ENCODE measurements at regions of chr18 and their contacts with region 1.

Region 1: GRCh38 chr18:67938660-67939059 is 422.1 kb upstream of the DSEL start:
- DNase-seq: peak; percentile 84
- ATAC-seq: peak; percentile 97
- H3K4me3 ChIP-seq: no peak overlapping the region
- H3K27ac ChIP-seq: peak overlapping the region; percentile 99; the same call in 1 of the 2 replicates
- H3K4me1 ChIP-seq: peaks cover 2% of the 10 kb centered on the region; the same call in 1 of the 2 replicates
- H3K27me3 ChIP-seq: no peaks in the 10 kb centered on the region
- CTCF ChIP-seq: no peak
- POLR2A ChIP-seq: no peak
- RAD21 ChIP-seq: no peak

Region 2: DNA sequence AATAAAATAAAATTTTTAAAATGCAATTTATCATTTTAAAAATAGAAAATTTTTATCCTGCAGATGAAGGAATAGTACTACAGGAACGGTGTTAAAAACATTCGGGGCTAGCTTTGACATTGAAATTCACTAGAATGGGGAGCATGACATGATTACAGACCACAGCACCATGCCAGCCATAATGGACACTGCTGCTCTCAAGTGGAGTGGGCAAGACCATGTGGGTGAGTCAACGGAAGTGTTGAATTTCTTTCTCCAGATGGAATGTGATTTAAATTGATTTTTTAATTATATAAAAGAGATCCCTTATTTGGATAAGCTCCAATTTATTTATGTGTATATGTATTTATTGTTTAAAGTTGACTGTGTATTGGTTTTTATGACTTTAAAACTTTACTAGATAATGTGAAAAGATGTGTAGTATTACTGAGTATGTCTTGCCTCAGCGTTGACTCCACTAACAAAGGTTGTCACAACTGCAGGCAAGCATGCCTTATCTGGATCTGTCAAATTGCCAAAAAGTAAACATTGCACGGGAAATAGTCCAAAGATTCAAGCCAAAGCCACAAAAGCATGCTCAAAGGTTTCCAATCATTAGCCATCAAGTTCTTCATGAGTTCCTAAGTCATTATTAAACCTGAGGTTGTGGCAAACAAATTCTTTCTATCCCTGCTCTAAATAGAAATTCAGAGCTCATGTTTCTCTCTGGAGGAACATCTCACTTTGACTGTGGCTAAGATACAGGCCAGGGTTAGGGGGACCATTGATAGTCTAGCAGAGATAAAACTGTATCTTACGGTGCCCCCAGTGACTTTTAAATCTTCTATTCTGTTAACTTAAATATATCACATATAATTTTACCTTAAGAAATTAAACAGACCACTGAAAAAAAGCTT is 239.4 kb after region 1 on chr18:
- CTCF ChIA-PET with region 1: no interaction called
- POLR2A ChIA-PET with region 1: no interaction called
- dilution Hi-C with region 1: no loop called
- in situ Hi-C with region 1: no loop called
- intact Hi-C with region 1: loop called (anchors 10 kb)
- DNase-seq: peak; percentile 99
- ATAC-seq: peak; percentile 96
- H3K4me3 ChIP-seq: no peak overlapping the region
- H3K27ac ChIP-seq: peak overlapping the region; percentile 91; the same call in 1 of the 2 replicates
- H3K4me1 ChIP-seq: peaks cover 6% of the 10 kb centered on the region; the same call in 1 of the 2 replicates
- H3K27me3 ChIP-seq: no peaks in the 10 kb centered on the region
- CTCF ChIP-seq: no peak
- POLR2A ChIP-seq: no peak
- RAD21 ChIP-seq: peak; percentile 9; the same call in 1 of the 2 replicates

Measured in IMR-90 (cell line).